Mammary epithelial cell (primary cell): ENCODE measurements at regions of chr11 and their contacts with region 1.

Region 1: DNA sequence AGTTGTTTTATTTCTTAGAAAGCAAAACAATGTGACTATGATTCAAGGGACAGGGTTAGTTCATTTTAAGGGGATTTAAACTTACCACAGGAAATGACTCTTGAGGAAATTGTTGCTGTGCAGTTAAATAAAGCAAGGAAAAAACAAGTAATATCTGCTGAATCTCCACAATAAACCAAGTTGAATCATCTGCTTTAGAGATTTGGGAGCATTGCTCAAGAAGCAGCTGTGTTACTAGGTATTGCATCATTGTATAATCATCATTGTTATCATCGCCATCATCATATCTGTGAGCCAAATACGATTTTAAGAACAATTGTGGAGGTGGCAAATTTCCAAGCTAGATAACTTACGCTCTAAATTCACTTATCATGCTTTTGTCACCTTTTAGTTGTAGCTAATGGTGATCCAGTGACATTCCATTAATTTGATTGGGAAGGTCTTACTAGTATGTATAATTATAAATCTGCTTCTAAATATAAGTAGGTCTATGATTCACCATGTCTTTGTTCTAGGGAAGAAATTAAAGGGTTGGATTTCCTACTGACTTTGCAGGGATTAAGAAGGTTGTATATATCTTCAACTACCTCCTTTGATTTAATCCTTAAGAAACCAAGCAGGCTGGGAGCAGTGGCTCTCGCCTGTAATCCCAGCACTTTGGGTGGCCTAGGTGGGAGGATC is 19.9 kb downstream of the MMP10 start:
- DNase-seq: peak; percentile 97
- H3K4me3 ChIP-seq: no peak overlapping the region
- H3K27ac ChIP-seq: peak overlapping the region; percentile 83
- H3K4me1 ChIP-seq: peaks cover 37% of the 10 kb centered on the region
- H3K27me3 ChIP-seq: no peaks in the 10 kb centered on the region
- CTCF ChIP-seq: no peak

Region 2: GRCh38 chr11:102780491-102780918 is 20.0 kb after region 1 on chr11 and contains the start of gene MMP10:
- CTCF ChIA-PET with region 1: interaction called, 4 read pairs
- dilution Hi-C with region 1: no loop called
- in situ Hi-C with region 1: no loop called
- intact Hi-C with region 1: loop called (anchors 1 kb)
- DNase-seq: peak; percentile 88
- H3K4me3 ChIP-seq: no peak within 1 kb of the TSS
- H3K27ac ChIP-seq: no peak within 1 kb of the TSS
- H3K4me1 ChIP-seq: peaks cover 26% of the 10 kb centered on the region
- H3K27me3 ChIP-seq: no peaks in the 10 kb centered on the region
- CTCF ChIP-seq: peak; percentile 71 to 76
- total RNA-seq, gene MMP10: 2.5 to 30.6 TPM